ENCODE measurements at regions of chr4 and their contacts with region 1.

Region 1: GRCh38 chr4:80081581-80081980 is 8.6 kb upstream of the ANTXR2 start:
- DNase-seq: no peak
- H3K4me3 ChIP-seq: no peak overlapping the region
- H3K27ac ChIP-seq: no peak overlapping the region
- H3K4me1 ChIP-seq: peaks cover 0 to 7% (median 4%) of the 10 kb centered on the region in 4 donors
- H3K27me3 ChIP-seq: no peaks in the 10 kb centered on the region
- CTCF ChIP-seq: no peak
- EP300 ChIP-seq: no peak
- POLR2A ChIP-seq: no peak

Region 2: GRCh38 chr4:79996851-79997250 is 84.7 kb before region 1 on chr4:
- intact Hi-C with region 1: no loop called
- DNase-seq: no peak
- H3K4me3 ChIP-seq: no peak overlapping the region
- H3K27ac ChIP-seq: no peak overlapping the region
- H3K4me1 ChIP-seq: peaks cover 11 to 53% (median 37%) of the 10 kb centered on the region in 4 donors
- H3K27me3 ChIP-seq: no peaks in the 10 kb centered on the region
- CTCF ChIP-seq: no peak
- EP300 ChIP-seq: no peak
- POLR2A ChIP-seq: no peak

Region 3: DNA sequence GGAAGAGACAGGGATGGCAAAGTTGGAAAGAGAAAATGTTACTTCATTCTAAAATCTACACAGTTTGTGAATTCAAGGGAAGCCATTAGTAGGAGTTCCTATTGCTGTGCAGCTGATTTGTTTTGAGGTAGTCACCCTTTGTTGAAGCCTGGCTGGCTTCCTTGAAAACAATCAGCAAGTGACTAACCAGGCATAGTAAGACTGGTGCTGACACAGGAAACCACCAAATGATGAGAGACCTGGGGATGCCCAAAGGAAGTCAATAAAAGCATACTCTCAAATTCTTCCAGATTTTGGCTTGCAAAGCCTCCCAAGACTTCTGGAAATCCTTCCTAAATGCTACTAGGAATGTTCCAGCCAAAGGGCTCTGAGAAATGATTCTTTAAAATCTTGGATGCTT is 91.8 kb after region 1 on chr4:
- intact Hi-C with region 1: loop called (anchors 5 kb)
- DNase-seq: no peak
- H3K4me3 ChIP-seq: no peak overlapping the region
- H3K27ac ChIP-seq: no peak overlapping the region
- H3K4me1 ChIP-seq: peaks cover 0 to 10% (median 0%) of the 10 kb centered on the region in 4 donors
- H3K27me3 ChIP-seq: no peaks in the 10 kb centered on the region
- CTCF ChIP-seq: no peak
- EP300 ChIP-seq: no peak
- POLR2A ChIP-seq: no peak

Region 4: DNA sequence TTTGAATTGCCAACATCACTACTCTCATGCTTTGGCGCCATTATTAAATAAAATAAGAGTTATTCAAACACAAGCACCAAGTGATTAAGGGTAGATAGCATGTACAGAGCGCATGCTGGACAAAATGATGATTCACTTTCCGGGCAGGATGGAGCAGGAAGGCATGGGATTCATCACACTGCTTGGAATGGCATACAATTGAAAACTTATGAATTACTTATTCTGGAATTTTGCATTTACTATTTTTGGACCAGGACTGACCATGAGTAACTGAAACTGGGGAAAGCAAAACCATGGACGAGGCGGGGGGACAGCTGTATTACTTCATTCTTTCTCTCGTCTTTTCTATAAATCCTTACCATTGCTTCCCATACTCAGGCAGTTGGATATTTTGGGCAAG is 156.4 kb after region 1 on chr4:
- intact Hi-C with region 1: no loop called
- DNase-seq: no peak
- H3K4me3 ChIP-seq: no peak overlapping the region
- H3K27ac ChIP-seq: no peak overlapping the region
- H3K4me1 ChIP-seq: peaks cover 0 to 8% (median 0%) of the 10 kb centered on the region in 4 donors
- H3K27me3 ChIP-seq: no peaks in the 10 kb centered on the region
- CTCF ChIP-seq: no peak
- EP300 ChIP-seq: no peak
- POLR2A ChIP-seq: no peak

Region 5: GRCh38 chr4:80454040-80454439 is 372.5 kb after region 1 on chr4:
- intact Hi-C with region 1: no loop called
- DNase-seq: no peak
- H3K4me3 ChIP-seq: no peak overlapping the region
- H3K27ac ChIP-seq: no peak overlapping the region
- H3K4me1 ChIP-seq: no peaks in the 10 kb centered on the region
- H3K27me3 ChIP-seq: no peaks in the 10 kb centered on the region
- CTCF ChIP-seq: no peak
- EP300 ChIP-seq: no peak
- POLR2A ChIP-seq: no peak

Measured in esophagus muscularis mucosa (tissue), 4 donors.